T-cell (primary cell): ENCODE measurements at regions of chr1 and their contacts with region 1.

Region 1: GRCh38 chr1:205658943-205659581 is 21.2 kb downstream of the SLC45A3 start:
- DNase-seq: peak; percentile 32 to 81 (median 67)
- ATAC-seq: peak; percentile 83 to 94 (median 88)
- H3K4me3 ChIP-seq: no peak overlapping the region
- H3K4me3 Mint-ChIP-seq: no peak overlapping the region
- H3K27ac ChIP-seq: no peak overlapping the region
- H3K27ac Mint-ChIP-seq: no peak overlapping the region
- H3K4me1 ChIP-seq: peaks cover 0 to 4% of the 10 kb centered on the region in 2 experiments
- H3K4me1 Mint-ChIP-seq: peaks cover 0 to 5% (median 0%) of the 10 kb centered on the region in 3 donors
- H3K27me3 ChIP-seq: peaks cover 0 to 29% of the 10 kb centered on the region in 2 experiments
- H3K27me3 Mint-ChIP-seq: peaks cover 4 to 6% of the 10 kb centered on the region in 2 donors

Region 2: DNA sequence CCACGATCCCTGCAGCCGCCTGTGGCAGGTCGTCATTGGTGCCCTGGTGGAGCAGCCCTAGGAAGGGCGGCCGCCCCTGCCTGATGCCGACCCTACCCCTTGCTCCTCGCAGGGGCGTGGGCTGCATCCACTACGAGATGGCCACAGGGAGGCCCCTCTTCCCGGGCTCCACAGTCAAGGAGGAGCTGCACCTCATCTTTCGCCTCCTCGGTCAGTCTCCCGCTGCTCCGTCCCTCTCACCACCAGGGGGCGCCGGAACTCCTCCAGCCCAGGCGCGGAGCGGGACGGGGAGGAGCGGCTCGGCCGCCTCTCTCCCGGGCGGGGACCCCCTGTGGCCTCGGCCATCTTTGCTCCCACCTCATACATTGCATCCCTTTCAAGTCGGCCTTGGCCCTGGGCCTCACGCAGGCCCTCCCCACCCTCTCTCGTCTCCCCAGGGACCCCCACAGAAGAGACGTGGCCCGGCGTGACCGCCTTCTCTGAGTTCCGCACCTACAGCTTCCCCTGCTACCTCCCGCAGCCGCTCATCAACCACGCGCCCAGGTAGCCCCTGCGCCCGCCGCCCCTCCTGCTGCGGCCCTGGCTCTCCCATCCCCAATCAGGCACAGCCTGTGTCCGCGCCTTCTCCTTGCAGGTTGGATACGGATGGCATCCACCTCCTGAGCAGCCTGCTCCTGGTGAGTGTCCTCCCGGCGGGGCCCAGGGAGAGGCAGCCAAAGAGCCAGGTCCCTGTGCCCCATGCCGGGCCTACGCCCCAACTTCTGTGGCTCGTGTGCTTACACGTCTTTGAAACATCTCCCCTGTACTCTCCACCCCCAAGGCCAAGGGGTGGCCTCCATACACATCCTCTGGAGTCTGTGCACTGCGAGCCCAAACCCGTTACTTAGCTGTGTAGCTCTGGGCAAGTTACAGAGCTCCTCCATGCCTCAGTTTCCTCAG is 129.9 kb before region 1 on chr1:
- CTCF ChIA-PET with region 1: interaction called, 23 to 35 read pairs
- POLR2A ChIA-PET with region 1: no interaction called
- DNase-seq: peak; percentile 41 to 87 (median 77)
- ATAC-seq: peak; percentile 77 to 93 (median 86)
- H3K4me3 ChIP-seq: peak overlapping the region in 1 of 2 donors; percentile 26
- H3K4me3 Mint-ChIP-seq: peak overlapping the region in 2 of 3 donors; percentile 53 to 68
- H3K27ac ChIP-seq: no peak overlapping the region
- H3K27ac Mint-ChIP-seq: no peak overlapping the region
- H3K4me1 ChIP-seq: peaks cover 0 to 9% of the 10 kb centered on the region in 2 experiments
- H3K4me1 Mint-ChIP-seq: peaks cover 3 to 6% (median 4%) of the 10 kb centered on the region in 3 donors
- H3K27me3 ChIP-seq: peaks cover 0 to 28% of the 10 kb centered on the region in 2 experiments
- H3K27me3 Mint-ChIP-seq: peaks cover 4 to 11% of the 10 kb centered on the region in 2 donors

Region 3: DNA sequence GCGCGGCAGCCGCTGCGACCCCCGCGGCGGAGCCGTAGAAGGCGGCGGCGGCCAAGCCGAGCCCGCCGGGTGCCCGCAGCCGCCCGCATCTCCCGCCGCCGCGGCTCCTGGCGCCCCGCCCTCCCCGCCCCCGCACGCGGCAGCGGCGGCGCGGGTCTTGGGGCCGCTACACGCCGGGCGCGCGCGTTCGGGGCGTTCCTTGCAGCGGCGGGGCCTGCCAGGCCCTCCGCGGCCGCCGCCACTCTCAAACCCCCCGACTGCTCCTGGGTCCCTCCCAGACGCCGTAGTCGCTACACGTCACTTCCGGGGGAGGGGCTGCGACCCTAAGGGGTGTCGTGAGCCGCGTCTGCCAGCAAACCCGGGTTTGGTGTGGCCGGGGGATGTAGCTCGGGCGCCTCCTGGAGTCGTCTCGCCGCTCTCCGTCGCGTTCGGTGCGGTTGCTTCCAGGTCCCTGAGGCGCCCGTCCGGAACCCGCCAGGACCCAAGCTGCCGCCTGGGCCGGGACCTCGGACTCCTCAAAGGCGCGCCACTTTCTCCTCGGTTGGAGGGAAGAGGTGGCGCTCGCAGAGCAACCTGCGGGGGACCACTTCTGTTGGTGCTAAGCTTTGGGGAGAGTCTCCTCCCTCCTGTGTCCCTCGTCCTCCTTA is 27.2 kb before region 1 on chr1 and contains the start of gene ELK4:
- CTCF ChIA-PET with region 1: interaction called, 3 to 26 read pairs
- POLR2A ChIA-PET with region 1: interaction called in 1 of 2 experiments, 4 read pairs
- DNase-seq: peak; percentile 99 to 100 (median 100)
- ATAC-seq: peak; percentile 82 to 86 (median 84)
- H3K4me3 ChIP-seq: peak within 1 kb of the TSS; percentile 79 to 91
- H3K4me3 Mint-ChIP-seq: peak within 1 kb of the TSS; percentile 85 to 95 (median 91)
- H3K27ac ChIP-seq: peak within 1 kb of the TSS; percentile 94
- H3K27ac Mint-ChIP-seq: peak within 1 kb of the TSS; percentile 95 to 98
- H3K4me1 ChIP-seq: peaks cover 22 to 29% of the 10 kb centered on the region in 2 experiments
- H3K4me1 Mint-ChIP-seq: peaks cover 41 to 48% (median 41%) of the 10 kb centered on the region in 3 donors
- H3K27me3 ChIP-seq: no peaks in the 10 kb centered on the region
- H3K27me3 Mint-ChIP-seq: no peaks in the 10 kb centered on the region
- total RNA-seq, gene ELK4: 131 to 185 (median 173) TPM

Region 4: DNA sequence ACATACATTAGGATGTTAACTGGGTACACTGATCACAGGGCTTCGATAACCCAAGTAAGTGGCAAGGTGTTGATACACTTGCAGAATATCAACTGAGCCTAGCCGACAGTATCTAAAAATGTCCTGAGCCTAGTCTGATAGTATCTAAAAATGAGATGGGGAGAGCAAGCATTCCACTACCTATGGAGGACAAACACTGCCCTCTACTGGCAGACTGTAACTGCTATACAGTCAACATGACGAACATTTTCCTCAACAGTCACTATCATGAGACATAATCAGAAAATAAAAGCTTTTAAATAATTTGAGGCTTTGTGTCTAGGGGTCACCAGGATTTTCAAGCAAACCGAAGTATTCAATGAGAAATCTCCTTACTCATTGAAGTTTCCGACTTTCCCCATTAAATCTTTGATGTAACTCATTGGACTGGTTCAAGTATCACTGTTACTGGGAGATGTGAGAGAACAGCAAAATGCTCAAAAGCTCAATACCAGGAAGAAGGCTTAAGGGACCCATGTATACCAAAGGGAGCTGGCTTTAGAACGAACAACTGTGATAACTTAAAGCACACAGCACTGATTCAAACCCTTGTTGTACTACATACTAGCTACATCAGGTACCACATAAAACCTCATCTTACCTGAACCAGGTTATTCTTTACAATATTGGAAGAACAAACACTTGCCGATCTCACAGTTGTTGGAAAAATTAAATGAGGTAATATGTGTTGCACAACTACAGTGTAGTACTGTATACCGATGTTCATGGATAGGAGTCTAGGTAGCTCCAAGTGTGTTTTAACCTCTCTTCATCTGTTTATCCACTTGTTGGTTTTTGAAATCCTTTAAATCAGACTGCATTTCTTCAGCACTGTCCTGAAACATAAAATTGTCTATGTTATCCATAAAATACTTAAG is 52.3 kb after region 1 on chr1:
- CTCF ChIA-PET with region 1: interaction called, 12 to 83 read pairs
- POLR2A ChIA-PET with region 1: no interaction called
- DNase-seq: peak in 32 of 35 experiments; percentile 12 to 88 (median 48)
- ATAC-seq: peak; percentile 81 to 91 (median 86)
- H3K4me3 ChIP-seq: no peak overlapping the region
- H3K4me3 Mint-ChIP-seq: no peak overlapping the region
- H3K27ac ChIP-seq: no peak overlapping the region
- H3K27ac Mint-ChIP-seq: peak overlapping the region in 1 of 2 donors; percentile 4
- H3K4me1 ChIP-seq: no peaks in the 10 kb centered on the region
- H3K4me1 Mint-ChIP-seq: peaks cover 5 to 17% (median 14%) of the 10 kb centered on the region in 3 donors
- H3K27me3 ChIP-seq: no peaks in the 10 kb centered on the region
- H3K27me3 Mint-ChIP-seq: no peaks in the 10 kb centered on the region

Region 5: DNA sequence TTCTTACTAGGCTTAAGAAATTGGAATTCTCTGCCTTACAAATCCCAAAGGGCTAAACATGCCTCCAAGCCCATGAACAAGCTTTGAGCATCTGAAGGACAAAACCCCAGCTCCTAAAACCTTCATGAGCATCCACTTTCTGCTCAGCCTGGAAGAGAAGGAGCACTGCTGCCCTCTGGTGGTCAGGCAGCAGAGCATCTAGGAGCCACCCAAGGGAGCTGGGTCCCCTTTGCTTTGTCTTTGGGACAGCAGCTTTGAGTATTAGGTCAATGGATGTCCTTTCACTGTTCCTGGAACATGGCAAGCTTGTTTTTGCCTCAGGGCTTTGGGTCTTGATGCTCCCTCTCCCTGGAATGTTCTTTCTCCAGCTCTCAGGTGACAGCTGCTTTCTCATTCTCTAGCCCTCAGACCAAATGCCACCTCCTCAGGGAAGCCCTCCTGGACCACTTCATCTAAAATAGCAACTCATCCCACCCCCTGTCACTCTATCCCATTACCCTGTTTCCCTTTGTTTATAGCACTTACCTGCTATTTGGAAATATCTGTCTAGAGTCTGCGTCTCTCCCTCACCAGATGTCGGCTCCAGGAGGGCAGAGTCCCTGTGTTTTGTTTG is 318.4 kb after region 1 on chr1:
- CTCF ChIA-PET with region 1: interaction called, 18 to 62 read pairs
- POLR2A ChIA-PET with region 1: no interaction called
- DNase-seq: peak; percentile 31 to 88 (median 67)
- ATAC-seq: peak; percentile 66 to 79 (median 74)
- H3K4me3 ChIP-seq: no peak overlapping the region
- H3K4me3 Mint-ChIP-seq: no peak overlapping the region
- H3K27ac ChIP-seq: no peak overlapping the region
- H3K27ac Mint-ChIP-seq: no peak overlapping the region
- H3K4me1 ChIP-seq: peaks cover 0 to 3% of the 10 kb centered on the region in 2 experiments
- H3K4me1 Mint-ChIP-seq: no peaks in the 10 kb centered on the region
- H3K27me3 ChIP-seq: peaks cover 0 to 14% of the 10 kb centered on the region in 2 experiments
- H3K27me3 Mint-ChIP-seq: peaks cover 2 to 3% of the 10 kb centered on the region in 2 donors